Activated naive CD4-positive, alpha-beta T cell treated with anti-CD3 and anti-CD28 coated beads for 36 hours (primary cell): ENCODE measurements at regions of chr1 and their contacts with region 1.

Region 1: GRCh38 chr1:52404116-52404986 is at the starts of genes ORC1 and PRPF38A:
- DNase-seq: peak; percentile 99
- H3K4me3 Mint-ChIP-seq: peak within 1 kb of the TSS; percentile 100
- H3K27ac Mint-ChIP-seq: peak within 1 kb of the TSS; percentile 99
- H3K4me1 Mint-ChIP-seq: peaks cover 45% of the 10 kb centered on the region
- H3K27me3 Mint-ChIP-seq: no peaks in the 10 kb centered on the region
- total RNA-seq, gene ORC1: 46.9 to 49.3 TPM
- total RNA-seq, gene PRPF38A: 86.0 to 91.8 TPM

Region 2: GRCh38 chr1:52424231-52424636 is 19.9 kb after region 1 on chr1:
- CTCF ChIA-PET with region 1: interaction called, 9 read pairs
- intact Hi-C with region 1: loop called (anchors 1 kb)
- DNase-seq: peak; percentile 34
- H3K4me3 Mint-ChIP-seq: peak overlapping the region; percentile 57
- H3K27ac Mint-ChIP-seq: peak overlapping the region; percentile 83
- H3K4me1 Mint-ChIP-seq: peaks cover 51% of the 10 kb centered on the region
- H3K27me3 Mint-ChIP-seq: no peaks in the 10 kb centered on the region

Region 3: DNA sequence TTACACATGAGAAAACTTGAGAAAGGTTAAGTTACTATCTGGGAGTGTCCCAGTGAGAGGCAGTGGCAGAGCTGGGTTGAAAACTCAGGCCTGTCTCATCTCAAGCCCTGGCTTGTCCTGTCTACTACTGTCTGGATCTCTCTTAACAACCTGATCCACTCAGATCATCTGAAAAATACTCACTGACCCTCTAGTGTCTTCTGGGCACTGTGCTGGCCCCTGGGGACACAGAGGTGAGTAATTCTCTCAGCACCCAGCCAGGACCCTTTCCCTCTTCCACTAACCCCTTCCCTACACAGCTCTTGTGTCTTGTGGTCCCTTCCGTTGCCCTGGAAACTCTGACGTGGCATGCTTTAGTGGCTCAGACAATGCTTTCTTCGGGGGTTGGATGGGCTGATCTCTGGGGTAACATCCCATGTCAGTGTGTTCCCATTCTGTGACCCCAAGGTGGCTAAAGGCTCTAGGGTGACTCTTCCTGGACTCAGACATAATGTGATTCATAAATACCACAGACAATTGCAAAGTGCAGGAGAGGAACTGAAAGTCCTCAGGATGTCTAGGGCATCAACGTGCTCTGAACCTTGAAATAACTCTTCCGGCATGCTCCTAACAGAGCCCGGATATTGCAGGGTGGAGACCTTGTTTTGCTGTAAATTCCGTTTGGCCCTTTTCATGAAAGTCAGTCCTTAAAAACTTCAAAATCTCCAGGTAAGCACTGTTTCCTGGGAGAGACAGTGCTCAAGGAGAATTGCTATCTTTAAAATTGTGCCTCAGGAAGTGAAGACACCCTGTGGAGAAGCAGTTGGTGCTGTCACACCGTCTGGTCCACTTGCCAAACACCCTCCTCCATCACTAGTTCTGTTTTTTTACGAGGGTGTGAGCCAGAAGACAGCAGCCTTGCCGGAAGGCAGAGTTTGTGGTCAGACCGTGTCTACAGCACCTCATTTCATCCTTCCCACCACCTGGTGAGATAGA is 232.7 kb after region 1 on chr1:
- CTCF ChIA-PET with region 1: no interaction called
- intact Hi-C with region 1: loop called (anchors 1 kb)
- DNase-seq: peak; percentile 84
- H3K4me3 Mint-ChIP-seq: peak overlapping the region; percentile 73
- H3K27ac Mint-ChIP-seq: peak overlapping the region; percentile 98
- H3K4me1 Mint-ChIP-seq: peaks cover 79% of the 10 kb centered on the region
- H3K27me3 Mint-ChIP-seq: no peaks in the 10 kb centered on the region

Region 4: DNA sequence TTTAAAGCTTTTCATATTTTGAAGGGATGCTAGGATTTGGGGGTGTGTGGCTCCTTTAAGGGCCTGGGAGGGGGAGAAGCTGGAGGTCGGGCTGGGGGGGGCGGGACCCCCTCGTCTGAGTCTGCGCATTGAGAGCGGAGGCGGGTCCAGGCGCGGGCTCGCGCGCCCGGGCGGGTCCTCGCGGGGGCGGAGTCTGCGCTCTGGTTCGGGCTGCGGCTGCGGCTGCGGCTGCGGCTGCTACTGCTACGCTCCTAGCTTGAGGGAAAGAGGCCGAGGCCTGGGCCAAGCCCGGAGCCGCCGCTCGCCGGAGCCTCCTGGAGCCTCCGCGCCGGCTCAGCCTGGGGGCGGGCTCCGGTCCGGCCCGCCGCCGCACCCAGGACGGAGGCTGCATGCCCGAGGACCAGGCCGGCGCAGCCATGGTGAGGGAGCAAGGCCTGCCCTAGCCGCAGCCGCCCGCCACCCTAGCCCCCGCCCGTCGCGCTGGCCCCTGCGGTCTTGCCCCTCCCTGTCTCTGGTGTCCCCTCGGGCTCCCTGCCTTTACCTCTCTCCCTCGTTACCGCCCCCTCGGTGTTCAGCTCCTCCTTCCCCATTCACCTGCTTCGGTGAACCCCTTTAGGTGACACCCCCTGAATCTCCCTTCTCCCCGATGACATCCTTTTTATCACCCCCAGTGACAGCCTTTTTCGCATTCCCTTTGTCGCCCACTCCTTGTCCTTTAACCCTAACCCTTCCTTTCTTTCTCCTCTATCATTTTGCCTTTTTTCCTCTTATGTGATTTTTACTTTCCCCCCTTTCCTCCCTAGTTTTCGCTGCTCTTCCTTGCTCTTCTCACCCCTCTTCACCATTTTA is 322.1 kb after region 1 on chr1 and contains the start of gene ZYG11B:
- CTCF ChIA-PET with region 1: no interaction called
- intact Hi-C with region 1: loop called (anchors 1 kb)
- DNase-seq: peak; percentile 91
- H3K4me3 Mint-ChIP-seq: peak within 1 kb of the TSS; percentile 85
- H3K27ac Mint-ChIP-seq: peak within 1 kb of the TSS; percentile 55
- H3K4me1 Mint-ChIP-seq: peaks cover 33% of the 10 kb centered on the region
- H3K27me3 Mint-ChIP-seq: no peaks in the 10 kb centered on the region
- total RNA-seq, gene ZYG11B: 10.7 to 11.6 TPM

Region 5: GRCh38 chr1:53014791-53015507 is 610.6 kb after region 1 on chr1:
- CTCF ChIA-PET with region 1: no interaction called
- intact Hi-C with region 1: loop called (anchors 1 kb)
- DNase-seq: peak; percentile 91
- H3K4me3 Mint-ChIP-seq: peak overlapping the region; percentile 78
- H3K27ac Mint-ChIP-seq: peak overlapping the region; percentile 60
- H3K4me1 Mint-ChIP-seq: peaks cover 20% of the 10 kb centered on the region
- H3K27me3 Mint-ChIP-seq: no peaks in the 10 kb centered on the region